Endothelial cell of umbilical vein (primary cell): ENCODE measurements at regions of chr6 and their contacts with region 1.

Region 1: GRCh38 chr6:99520855-99521632 is 5.8 kb upstream of the USP45 start:
- DNase-seq: peak; percentile 90
- H3K4me3 ChIP-seq: peak overlapping the region; percentile 70 to 88 (median 87)
- H3K27ac ChIP-seq: peak overlapping the region; percentile 69
- H3K4me1 ChIP-seq: peaks cover 2% of the 10 kb centered on the region
- H3K27me3 ChIP-seq: no peaks in the 10 kb centered on the region
- CTCF ChIP-seq: peak; percentile 71 to 83
- POLR2A ChIP-seq: peak; percentile 96

Region 2: DNA sequence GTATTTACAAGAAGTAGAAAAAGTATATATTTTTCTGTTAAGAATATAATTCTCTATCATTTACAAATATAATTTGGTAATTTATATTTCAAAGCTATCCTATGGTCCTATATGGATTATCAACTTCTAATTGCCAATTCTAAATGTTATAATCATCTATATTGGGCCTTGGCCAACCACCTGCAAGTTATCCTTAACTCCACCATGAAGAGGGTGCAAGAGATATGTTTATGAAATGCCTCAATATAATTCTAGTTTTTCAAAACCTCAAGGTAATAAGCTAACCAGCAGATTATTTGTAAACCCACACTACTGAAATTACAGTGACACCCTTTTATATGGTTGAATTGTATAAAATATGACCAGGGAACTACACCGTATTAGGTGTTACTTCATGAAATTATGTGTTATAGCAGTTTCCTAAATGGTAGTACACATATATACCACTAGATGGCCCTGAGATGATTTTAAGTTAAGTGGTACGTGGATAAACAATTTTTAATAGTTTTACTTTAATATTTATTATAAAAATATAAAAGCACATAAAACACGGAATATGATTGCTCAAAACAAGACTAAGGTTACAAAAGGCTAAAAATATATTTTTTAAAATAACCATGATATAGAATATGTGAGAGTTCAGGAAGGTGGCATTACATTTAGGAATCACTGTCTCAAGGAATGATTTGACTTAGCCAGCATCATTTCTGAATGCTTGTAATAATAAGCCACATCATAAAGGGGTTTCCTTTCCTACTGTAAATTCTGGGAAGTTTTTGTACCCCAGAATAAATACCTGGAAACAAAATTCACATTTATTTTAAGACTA is 86.1 kb before region 1 on chr6:
- CTCF ChIA-PET with region 1: no interaction called
- POLR2A ChIA-PET with region 1: no interaction called
- dilution Hi-C with region 1: no loop called
- intact Hi-C with region 1: no loop called
- DNase-seq: peak; percentile 57
- H3K4me3 ChIP-seq: no peak overlapping the region
- H3K27ac ChIP-seq: no peak overlapping the region
- H3K4me1 ChIP-seq: no peaks in the 10 kb centered on the region
- H3K27me3 ChIP-seq: no peaks in the 10 kb centered on the region
- CTCF ChIP-seq: peak; percentile 17 to 25
- POLR2A ChIP-seq: no peak

Region 3: DNA sequence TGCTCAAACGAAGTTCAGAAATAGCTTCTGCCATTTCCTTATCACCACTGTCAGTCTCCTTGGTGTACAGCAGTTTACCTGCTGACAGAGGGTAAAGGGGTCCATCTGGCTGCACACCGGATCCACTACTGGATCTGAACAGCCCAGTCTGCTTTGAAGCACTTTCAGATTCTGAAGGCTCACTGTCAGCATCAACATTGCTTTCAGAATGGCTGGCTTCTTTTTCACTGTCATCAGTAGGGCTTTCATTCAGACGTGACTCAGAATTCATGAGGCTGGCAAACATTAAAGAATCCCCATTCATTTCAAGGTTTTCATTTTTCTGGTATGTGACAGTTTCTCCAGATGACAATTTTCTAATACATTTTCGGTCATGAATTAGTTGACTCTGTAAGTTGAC is 75.0 kb before region 1 on chr6:
- CTCF ChIA-PET with region 1: no interaction called
- POLR2A ChIA-PET with region 1: no interaction called
- dilution Hi-C with region 1: no loop called
- intact Hi-C with region 1: no loop called
- DNase-seq: no peak
- H3K4me3 ChIP-seq: no peak overlapping the region
- H3K27ac ChIP-seq: no peak overlapping the region
- H3K4me1 ChIP-seq: no peaks in the 10 kb centered on the region
- H3K27me3 ChIP-seq: no peaks in the 10 kb centered on the region
- CTCF ChIP-seq: no peak
- POLR2A ChIP-seq: no peak

Region 4: GRCh38 chr6:99547524-99547923 is 26.5 kb after region 1 on chr6:
- CTCF ChIA-PET with region 1: no interaction called
- POLR2A ChIA-PET with region 1: interaction called, 10 read pairs
- dilution Hi-C with region 1: no loop called
- intact Hi-C with region 1: no loop called
- DNase-seq: no peak
- H3K4me3 ChIP-seq: no peak overlapping the region
- H3K27ac ChIP-seq: no peak overlapping the region
- H3K4me1 ChIP-seq: peaks cover 4% of the 10 kb centered on the region
- H3K27me3 ChIP-seq: no peaks in the 10 kb centered on the region
- CTCF ChIP-seq: no peak
- POLR2A ChIP-seq: no peak

Region 5: GRCh38 chr6:99603421-99604165 is 82.5 kb after region 1 on chr6:
- CTCF ChIA-PET with region 1: no interaction called
- POLR2A ChIA-PET with region 1: no interaction called
- dilution Hi-C with region 1: no loop called
- intact Hi-C with region 1: loop called (anchors 2 kb)
- DNase-seq: peak; percentile 38
- H3K4me3 ChIP-seq: no peak overlapping the region
- H3K27ac ChIP-seq: no peak overlapping the region
- H3K4me1 ChIP-seq: no peaks in the 10 kb centered on the region
- H3K27me3 ChIP-seq: peaks cover 79 to 100% of the 10 kb centered on the region in 2 experiments
- CTCF ChIP-seq: no peak
- POLR2A ChIP-seq: no peak

Region 6: DNA sequence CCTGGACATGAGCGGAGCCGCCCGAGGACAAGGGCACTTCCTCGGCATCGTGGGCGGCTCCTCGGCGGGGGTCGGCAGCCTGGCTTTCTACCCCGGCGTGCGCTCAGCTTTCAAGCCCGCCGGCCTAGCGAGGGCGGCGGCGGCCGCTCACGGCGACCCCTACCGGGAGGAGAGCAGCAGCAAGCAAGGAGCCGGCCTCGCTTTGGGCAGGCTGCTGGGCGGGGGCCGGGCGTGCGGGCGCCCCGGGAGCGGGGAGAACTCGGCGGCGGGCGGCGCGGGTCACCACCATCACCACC is 92.3 kb after region 1 on chr6:
- CTCF ChIA-PET with region 1: no interaction called
- POLR2A ChIA-PET with region 1: no interaction called
- dilution Hi-C with region 1: no loop called
- intact Hi-C with region 1: loop called (anchors 2 kb)
- DNase-seq: no peak
- H3K4me3 ChIP-seq: peak overlapping the region in 1 of 3 experiments; percentile 23
- H3K27ac ChIP-seq: no peak overlapping the region
- H3K4me1 ChIP-seq: peaks cover 6% of the 10 kb centered on the region
- H3K27me3 ChIP-seq: peaks cover 72 to 98% of the 10 kb centered on the region in 2 experiments
- CTCF ChIP-seq: peak; percentile 26 to 76
- POLR2A ChIP-seq: no peak

Region 7: DNA sequence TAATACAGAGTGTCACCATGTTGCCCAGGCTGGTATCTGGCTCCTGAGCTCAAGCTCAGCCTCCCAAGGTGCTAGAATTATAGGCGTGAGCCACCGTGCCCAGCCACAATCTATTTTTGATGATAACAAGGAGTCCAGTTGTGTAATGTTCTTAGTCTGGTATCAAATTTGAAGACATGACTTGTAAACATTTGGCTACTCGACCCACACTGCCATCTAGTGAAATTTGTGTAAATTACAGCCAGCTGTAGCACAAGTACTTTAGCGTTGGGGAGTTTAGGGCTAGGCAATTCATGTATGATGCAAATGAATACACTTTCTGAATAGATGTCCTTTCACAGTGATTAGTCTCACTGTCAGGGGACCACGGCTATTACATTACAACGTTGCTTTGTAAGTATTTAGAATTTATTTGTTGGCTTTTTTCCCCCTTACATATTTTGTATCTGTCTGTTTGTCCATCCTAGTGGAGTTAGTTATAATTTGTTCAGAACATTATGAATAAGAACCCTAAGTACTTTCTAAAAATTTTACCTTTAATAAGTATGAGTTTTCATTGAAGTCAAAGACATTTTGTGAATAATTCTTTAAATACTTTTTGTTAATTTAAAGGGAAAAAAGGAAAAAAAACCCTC is 225.3 kb after region 1 on chr6:
- CTCF ChIA-PET with region 1: interaction called, 4 read pairs
- POLR2A ChIA-PET with region 1: no interaction called
- dilution Hi-C with region 1: no loop called
- intact Hi-C with region 1: loop called (anchors 5 kb)
- DNase-seq: peak; percentile 81
- H3K4me3 ChIP-seq: no peak overlapping the region
- H3K27ac ChIP-seq: no peak overlapping the region
- H3K4me1 ChIP-seq: no peaks in the 10 kb centered on the region
- H3K27me3 ChIP-seq: peaks cover 12 to 20% of the 10 kb centered on the region in 2 experiments
- CTCF ChIP-seq: peak; percentile 58 to 64
- POLR2A ChIP-seq: no peak